OCI-LY7 (cell line): ENCODE measurements at regions of chr4 and their contacts with region 1.

Region 1: DNA sequence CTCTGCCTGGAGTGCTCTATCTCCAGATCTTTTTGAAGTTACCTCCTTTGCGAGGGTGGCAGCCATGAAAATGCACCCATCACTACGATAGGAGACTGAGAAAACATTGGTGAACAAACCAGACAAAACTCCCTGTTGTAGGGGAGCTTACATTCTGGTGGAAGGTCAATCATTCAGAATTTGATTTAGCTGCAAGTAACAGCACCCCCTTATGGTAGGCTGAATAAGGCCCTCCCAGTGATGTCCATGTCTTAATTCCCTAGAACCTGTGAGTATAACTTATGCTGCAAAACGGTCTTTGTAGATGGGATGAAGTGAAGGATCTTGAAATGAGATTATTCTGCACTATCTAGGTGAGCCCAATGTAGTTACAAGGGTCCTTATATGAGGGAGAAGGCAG is 5.6 kb upstream of the TEC start:
- DNase-seq: peak; percentile 45
- H3K4me3 ChIP-seq: no peak overlapping the region
- H3K27ac ChIP-seq: no peak overlapping the region
- H3K4me1 ChIP-seq: peaks cover 8% of the 10 kb centered on the region
- CTCF ChIP-seq: peak; percentile 85

Region 2: DNA sequence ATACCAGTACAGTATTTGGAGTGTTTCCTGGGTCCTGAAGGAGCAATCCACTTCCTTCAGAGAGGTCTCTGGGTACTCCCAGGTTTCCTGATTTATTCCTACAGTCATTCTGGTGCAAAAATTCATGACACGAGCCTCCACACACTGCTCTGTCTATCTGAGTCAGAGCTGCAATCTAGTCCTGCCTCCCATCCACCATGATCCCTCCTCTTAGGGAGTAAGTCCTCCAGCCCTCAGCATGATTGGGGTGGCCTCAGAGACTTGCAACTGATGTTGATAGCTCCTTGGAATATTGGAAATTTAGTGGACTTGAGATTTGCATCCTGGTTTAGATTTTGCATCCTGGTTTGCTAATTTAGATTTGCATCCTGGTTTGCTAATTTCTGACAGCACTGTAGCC is 279.2 kb before region 1 on chr4:
- CTCF ChIA-PET with region 1: no interaction called
- POLR2A ChIA-PET with region 1: no interaction called
- intact Hi-C with region 1: no loop called
- DNase-seq: no peak
- H3K4me3 ChIP-seq: no peak overlapping the region
- H3K27ac ChIP-seq: no peak overlapping the region
- H3K4me1 ChIP-seq: no peaks in the 10 kb centered on the region
- CTCF ChIP-seq: no peak

Region 3: GRCh38 chr4:48127682-48128394 is 147.4 kb before region 1 on chr4:
- CTCF ChIA-PET with region 1: no interaction called
- POLR2A ChIA-PET with region 1: no interaction called
- intact Hi-C with region 1: loop called (anchors 1 kb)
- DNase-seq: peak; percentile 65
- H3K4me3 ChIP-seq: no peak overlapping the region
- H3K27ac ChIP-seq: no peak overlapping the region
- H3K4me1 ChIP-seq: no peaks in the 10 kb centered on the region
- CTCF ChIP-seq: peak; percentile 82

Region 4: DNA sequence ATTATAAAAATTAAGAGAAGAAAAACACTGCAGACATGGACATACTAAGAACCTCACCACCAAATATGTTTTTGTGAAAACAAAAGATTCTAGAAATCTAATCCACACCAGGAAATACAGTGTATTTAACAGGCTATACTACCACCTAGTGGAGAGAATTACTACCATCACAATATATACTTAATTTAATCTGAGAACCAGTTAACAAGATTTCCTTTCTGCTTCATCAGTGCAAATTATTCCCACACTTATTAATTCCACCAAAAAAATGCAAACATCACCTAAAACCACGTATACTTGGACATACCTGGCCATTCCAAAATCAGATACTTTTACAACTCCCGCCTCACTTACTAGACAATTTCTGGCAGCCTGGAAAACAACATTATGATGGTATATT is 134.2 kb before region 1 on chr4:
- CTCF ChIA-PET with region 1: interaction called, 3 read pairs
- POLR2A ChIA-PET with region 1: interaction called, 3 read pairs
- intact Hi-C with region 1: loop called (anchors 5 kb)
- DNase-seq: peak; percentile 69
- H3K4me3 ChIP-seq: no peak overlapping the region
- H3K27ac ChIP-seq: no peak overlapping the region
- H3K4me1 ChIP-seq: peaks cover 34% of the 10 kb centered on the region
- CTCF ChIP-seq: peak; percentile 86